ENCODE measurements at regions of chr16 and their contacts with region 1.

Region 1: GRCh38 chr16:85245307-85246172 is 133.3 kb upstream of the CIBAR2 start:
- DNase-seq: no peak
- H3K4me3 ChIP-seq: no peak overlapping the region
- H3K27me3 ChIP-seq: no peaks in the 10 kb centered on the region
- CTCF ChIP-seq: peak; percentile 94

Region 2: DNA sequence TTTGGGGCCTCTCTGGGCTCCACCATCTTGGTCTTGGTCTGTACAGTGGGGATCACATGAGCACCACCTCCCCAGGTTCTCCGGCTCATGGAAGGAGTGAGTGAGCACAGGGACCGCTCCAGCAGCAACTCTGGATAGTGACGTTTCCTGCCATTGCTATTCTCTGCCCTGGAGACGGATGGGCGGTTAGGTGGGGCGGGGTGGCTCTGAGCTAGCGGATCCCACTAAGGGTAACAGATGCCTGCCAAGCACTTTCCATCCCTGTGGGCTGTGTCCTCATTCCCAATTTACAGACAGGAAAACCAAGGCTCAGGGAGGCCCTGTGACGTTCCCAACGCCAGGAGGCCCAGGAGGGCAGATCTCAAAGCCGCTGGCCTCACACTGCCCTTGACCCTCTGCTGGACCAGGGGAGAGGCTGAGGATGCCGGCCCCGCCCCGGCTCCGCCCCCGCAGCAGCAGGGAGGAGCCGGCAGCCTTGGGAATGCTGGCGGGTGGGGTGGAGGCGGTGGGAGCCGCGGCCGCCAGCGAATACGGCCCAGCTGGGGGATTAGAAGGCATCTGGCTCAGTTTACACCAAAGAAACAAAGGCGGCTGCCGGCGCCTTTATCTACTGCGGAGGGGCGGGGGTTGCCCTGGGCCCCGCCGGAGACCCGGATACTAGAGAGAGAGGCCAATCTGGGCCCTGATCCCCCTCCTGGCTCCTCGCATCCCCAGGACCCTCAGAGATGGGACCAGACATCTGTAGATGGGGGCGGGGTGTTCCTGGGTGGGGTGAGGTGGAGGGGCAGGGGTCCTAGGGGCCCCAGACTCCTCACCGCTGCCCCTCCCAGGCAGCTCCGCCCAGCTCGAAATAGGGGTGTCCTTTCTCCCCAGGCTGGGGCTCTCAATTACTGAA is 11.0 kb before region 1 on chr16:
- CTCF ChIA-PET with region 1: interaction called, 11 read pairs
- POLR2A ChIA-PET with region 1: interaction called, 3 read pairs
- DNase-seq: no peak
- H3K4me3 ChIP-seq: peak overlapping the region; percentile 41
- H3K27me3 ChIP-seq: no peaks in the 10 kb centered on the region
- CTCF ChIP-seq: 0 out of 2 replicates have a peak, but pooled peaks have one; percentile 9

Region 3: DNA sequence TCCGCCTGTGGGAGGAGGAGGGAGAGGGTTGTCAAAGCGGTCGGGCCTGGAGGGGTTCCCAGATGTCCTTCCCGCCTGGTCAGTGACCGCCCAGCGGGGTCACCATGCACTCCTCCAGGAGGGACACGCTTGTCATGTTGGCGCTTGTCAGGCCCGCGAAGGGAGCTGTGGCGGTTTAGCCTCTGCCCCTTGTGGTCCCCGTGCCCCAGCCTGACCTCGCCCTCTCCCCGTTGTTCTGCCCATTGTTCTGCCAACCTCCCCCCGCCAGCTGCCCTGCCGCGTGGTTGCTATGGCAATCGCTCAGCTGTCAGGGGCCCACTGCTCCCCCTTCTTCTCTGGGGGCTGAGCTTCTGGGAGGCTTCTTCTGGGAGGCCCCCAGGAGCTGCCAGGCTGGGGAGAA is 13.1 kb after region 1 on chr16:
- CTCF ChIA-PET with region 1: interaction called, 17 read pairs
- POLR2A ChIA-PET with region 1: no interaction called
- DNase-seq: no peak
- H3K4me3 ChIP-seq: no peak overlapping the region
- H3K27me3 ChIP-seq: no peaks in the 10 kb centered on the region
- CTCF ChIP-seq: no peak

Region 4: DNA sequence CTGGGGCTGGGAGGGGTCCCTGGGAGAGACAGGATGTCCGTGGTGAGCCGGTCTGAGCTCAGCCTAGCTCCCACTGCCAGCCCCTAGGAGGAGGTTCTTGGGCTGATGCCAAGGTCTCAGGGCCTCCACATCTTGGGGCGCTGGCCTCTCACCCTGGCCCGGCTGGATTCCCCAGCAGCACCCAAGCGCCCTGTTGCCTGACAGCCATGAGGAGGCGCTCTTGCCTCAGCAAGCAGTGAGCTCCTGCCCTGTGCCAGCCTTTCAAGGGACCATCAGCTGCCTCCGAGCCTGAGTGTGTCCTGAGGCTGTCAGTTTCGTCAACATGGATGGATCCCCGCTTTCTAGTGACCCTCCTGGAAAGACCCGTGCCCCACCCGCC is 101.7 kb after region 1 on chr16:
- CTCF ChIA-PET with region 1: no interaction called
- POLR2A ChIA-PET with region 1: no interaction called
- DNase-seq: no peak
- H3K4me3 ChIP-seq: no peak overlapping the region
- H3K27me3 ChIP-seq: no peaks in the 10 kb centered on the region
- CTCF ChIP-seq: peak; percentile 29; the same call in 1 of the 2 replicates